Mammary epithelial cell (primary cell): ENCODE measurements at regions of chr9 and their contacts with region 1.

Region 1: GRCh38 chr9:37415011-37415719 is 7.3 kb upstream of the GRHPR start:
- DNase-seq: peak; percentile 71
- H3K4me3 ChIP-seq: no peak overlapping the region
- H3K27ac ChIP-seq: no peak overlapping the region
- H3K4me1 ChIP-seq: peaks cover 46% of the 10 kb centered on the region
- H3K27me3 ChIP-seq: no peaks in the 10 kb centered on the region
- CTCF ChIP-seq: peak; percentile 83 to 86

Region 2: GRCh38 chr9:37187713-37188439 is 227.3 kb before region 1 on chr9:
- CTCF ChIA-PET with region 1: no interaction called
- dilution Hi-C with region 1: no loop called
- in situ Hi-C with region 1: no loop called
- intact Hi-C with region 1: no loop called
- DNase-seq: no peak
- H3K4me3 ChIP-seq: no peak overlapping the region
- H3K27ac ChIP-seq: no peak overlapping the region
- H3K4me1 ChIP-seq: no peaks in the 10 kb centered on the region
- H3K27me3 ChIP-seq: no peaks in the 10 kb centered on the region
- CTCF ChIP-seq: no peak

Region 3: DNA sequence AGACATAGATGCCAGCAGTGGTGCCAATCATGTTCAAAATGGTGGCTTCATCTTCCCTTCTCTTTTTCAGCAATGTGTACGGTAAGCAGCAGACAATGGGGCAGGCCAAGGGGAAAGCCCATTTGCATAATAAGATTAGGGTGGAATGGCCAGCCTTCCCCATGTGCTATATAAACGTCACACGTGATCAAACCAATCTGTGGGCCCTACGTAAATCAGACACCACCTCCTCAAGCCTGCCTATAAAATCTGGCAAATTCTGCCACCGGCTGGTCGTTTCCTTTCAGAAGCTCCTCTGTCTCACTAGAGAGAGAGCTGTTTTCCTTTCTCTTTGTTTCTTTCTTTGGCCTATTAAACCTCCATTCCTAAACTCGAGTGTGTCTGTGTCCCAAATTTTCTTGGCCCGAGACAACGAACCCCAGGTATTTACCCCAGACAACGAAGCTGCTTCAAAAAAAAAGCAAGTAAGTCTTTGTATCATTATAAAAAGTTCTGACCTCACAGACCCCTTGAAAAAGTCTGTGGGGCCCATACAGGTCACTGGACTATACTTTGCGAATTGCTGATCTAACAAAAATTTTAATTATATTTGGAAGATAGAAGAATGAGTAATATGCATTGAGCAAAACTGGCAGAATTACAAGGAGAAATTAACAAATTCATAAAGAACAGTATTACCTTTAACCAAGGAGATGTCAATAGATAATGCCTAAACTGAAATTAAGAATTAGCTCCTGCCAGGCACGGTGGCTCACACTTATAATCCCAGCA is 34.9 kb after region 1 on chr9:
- CTCF ChIA-PET with region 1: no interaction called
- dilution Hi-C with region 1: loop called (anchors 5 kb)
- in situ Hi-C with region 1: no loop called
- intact Hi-C with region 1: loop called (anchors 5 kb)
- DNase-seq: no peak
- H3K4me3 ChIP-seq: no peak overlapping the region
- H3K27ac ChIP-seq: no peak overlapping the region
- H3K4me1 ChIP-seq: peaks cover 21% of the 10 kb centered on the region
- H3K27me3 ChIP-seq: no peaks in the 10 kb centered on the region
- CTCF ChIP-seq: no peak

Region 4: GRCh38 chr9:37465249-37466036 is 50.3 kb after region 1 on chr9 and contains the start of gene ZBTB5:
- CTCF ChIA-PET with region 1: no interaction called
- dilution Hi-C with region 1: no loop called
- in situ Hi-C with region 1: no loop called
- intact Hi-C with region 1: loop called (anchors 2 kb)
- DNase-seq: peak; percentile 100
- H3K4me3 ChIP-seq: peak within 1 kb of the TSS; percentile 85 to 100 (median 96)
- H3K27ac ChIP-seq: peak within 1 kb of the TSS; percentile 91
- H3K4me1 ChIP-seq: peaks cover 23% of the 10 kb centered on the region
- H3K27me3 ChIP-seq: no peaks in the 10 kb centered on the region
- CTCF ChIP-seq: no peak
- total RNA-seq, gene ZBTB5: 7.6 to 20.5 TPM

Region 5: GRCh38 chr9:37592108-37592951 is 177.2 kb after region 1 on chr9 and contains the start of gene TOMM5:
- CTCF ChIA-PET with region 1: no interaction called
- dilution Hi-C with region 1: no loop called
- in situ Hi-C with region 1: no loop called
- intact Hi-C with region 1: loop called (anchors 10 kb)
- DNase-seq: peak; percentile 90
- H3K4me3 ChIP-seq: peak within 1 kb of the TSS; percentile 95 to 98 (median 98)
- H3K27ac ChIP-seq: peak within 1 kb of the TSS; percentile 88
- H3K4me1 ChIP-seq: peaks cover 25% of the 10 kb centered on the region
- H3K27me3 ChIP-seq: no peaks in the 10 kb centered on the region
- CTCF ChIP-seq: no peak
- total RNA-seq, gene TOMM5: 69.7 to 135 TPM